Natural killer cell (primary cell): ENCODE measurements at regions of chr3 and their contacts with region 1.

Region 1: GRCh38 chr3:142586803-142587406 is 8.4 kb upstream of the ATR start:
- DNase-seq: peak in 1 of 2 donors; percentile 75
- ATAC-seq: peak; percentile 49 to 70 (median 61)
- H3K4me3 ChIP-seq: no peak overlapping the region
- H3K4me3 Mint-ChIP-seq: no peak overlapping the region
- H3K27ac ChIP-seq: no peak overlapping the region
- H3K27ac Mint-ChIP-seq: no peak overlapping the region
- H3K4me1 ChIP-seq: no peaks in the 10 kb centered on the region
- H3K4me1 Mint-ChIP-seq: no peaks in the 10 kb centered on the region
- H3K27me3 ChIP-seq: peaks cover 3% of the 10 kb centered on the region
- H3K27me3 Mint-ChIP-seq: peaks cover 18 to 24% of the 10 kb centered on the region in 2 donors
- CTCF ChIP-seq: peak; percentile 49

Region 2: DNA sequence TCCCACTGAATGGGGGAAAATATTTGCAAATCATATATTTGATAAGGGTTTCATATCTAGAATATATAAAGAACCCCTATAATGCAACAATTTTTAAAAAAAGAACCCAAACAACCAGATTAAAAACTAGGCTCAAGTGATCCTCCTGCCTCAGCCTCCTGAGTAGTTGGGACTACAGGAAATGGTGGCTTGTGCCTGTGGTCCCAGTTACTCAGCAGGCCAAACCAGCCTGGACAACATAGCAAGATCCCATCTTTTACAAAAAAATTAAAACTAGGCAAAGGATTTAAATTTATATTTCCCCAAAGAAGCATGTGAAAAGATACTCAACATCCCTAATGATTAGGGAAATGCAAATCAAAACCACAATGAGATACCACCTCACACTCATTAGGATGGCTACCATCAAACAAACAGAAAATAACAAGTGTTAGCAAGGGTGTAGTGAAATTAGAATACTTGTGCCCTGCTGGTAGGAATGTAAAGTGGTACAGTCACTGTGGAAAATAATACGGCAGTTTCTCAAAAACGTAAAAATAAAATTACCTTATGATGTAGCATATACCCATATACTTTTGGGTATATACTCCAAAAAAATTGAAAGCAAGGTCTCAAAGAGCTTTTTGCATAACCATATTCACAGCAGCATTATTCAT is 457.3 kb before region 1 on chr3:
- intact Hi-C with region 1: no loop called
- DNase-seq: no peak
- ATAC-seq: no peak
- H3K4me3 ChIP-seq: no peak overlapping the region
- H3K4me3 Mint-ChIP-seq: peak overlapping the region; percentile 54
- H3K27ac ChIP-seq: peak overlapping the region; percentile 43
- H3K27ac Mint-ChIP-seq: peak overlapping the region; percentile 71 to 86
- H3K4me1 ChIP-seq: peaks cover 30% of the 10 kb centered on the region
- H3K4me1 Mint-ChIP-seq: peaks cover 46 to 53% of the 10 kb centered on the region in 2 donors
- H3K27me3 ChIP-seq: no peaks in the 10 kb centered on the region
- H3K27me3 Mint-ChIP-seq: no peaks in the 10 kb centered on the region
- CTCF ChIP-seq: no peak

Region 3: GRCh38 chr3:142987080-142987700 is 400.3 kb after region 1 on chr3:
- intact Hi-C with region 1: loop called (anchors 1 kb)
- DNase-seq: peak in 1 of 2 donors; percentile 62
- ATAC-seq: peak in 2 of 3 donors; percentile 60 to 63
- H3K4me3 ChIP-seq: no peak overlapping the region
- H3K4me3 Mint-ChIP-seq: no peak overlapping the region
- H3K27ac ChIP-seq: no peak overlapping the region
- H3K27ac Mint-ChIP-seq: no peak overlapping the region
- H3K4me1 ChIP-seq: no peaks in the 10 kb centered on the region
- H3K4me1 Mint-ChIP-seq: no peaks in the 10 kb centered on the region
- H3K27me3 ChIP-seq: no peaks in the 10 kb centered on the region
- H3K27me3 Mint-ChIP-seq: peaks cover 21 to 23% of the 10 kb centered on the region in 2 donors
- CTCF ChIP-seq: peak; percentile 75

Region 4: DNA sequence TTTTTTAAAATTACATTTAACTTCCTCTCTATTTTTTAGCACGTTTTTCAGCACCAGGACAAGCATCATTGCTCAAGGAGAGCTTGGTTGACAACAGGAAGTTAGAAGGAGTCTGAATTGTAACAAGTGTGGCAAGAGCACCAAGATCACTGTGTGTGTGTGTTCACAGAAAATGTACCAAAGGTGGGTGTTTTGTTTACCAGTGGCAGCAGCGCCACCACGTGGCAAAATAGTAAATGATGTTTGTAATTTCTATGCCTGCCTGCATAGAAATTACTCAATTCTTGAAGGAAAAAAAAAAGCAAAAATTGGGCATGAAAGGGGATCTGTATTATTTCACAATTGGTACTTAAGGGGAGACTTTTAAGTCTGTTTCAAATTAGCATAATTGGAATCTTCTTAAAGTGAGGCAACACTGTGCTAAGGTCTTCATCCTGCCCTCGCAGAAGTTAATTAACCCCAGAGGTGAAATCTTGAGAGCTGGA is 407.1 kb after region 1 on chr3:
- intact Hi-C with region 1: loop called (anchors 2 kb)
- DNase-seq: peak; percentile 46 to 79
- ATAC-seq: peak; percentile 68 to 71 (median 69)
- H3K4me3 ChIP-seq: no peak overlapping the region
- H3K4me3 Mint-ChIP-seq: no peak overlapping the region
- H3K27ac ChIP-seq: no peak overlapping the region
- H3K27ac Mint-ChIP-seq: no peak overlapping the region
- H3K4me1 ChIP-seq: no peaks in the 10 kb centered on the region
- H3K4me1 Mint-ChIP-seq: peaks cover 0 to 7% of the 10 kb centered on the region in 2 donors
- H3K27me3 ChIP-seq: no peaks in the 10 kb centered on the region
- H3K27me3 Mint-ChIP-seq: peaks cover 12 to 17% of the 10 kb centered on the region in 2 donors
- CTCF ChIP-seq: peak; percentile 95